ENCODE measurements at regions of chr3 and their contacts with region 1.

Region 1: GRCh38 chr3:155854141-155854940 is at the start of gene SLC33A1:
- DNase-seq: peak; percentile 99
- H3K4me3 Mint-ChIP-seq: peak within 1 kb of the TSS; percentile 97
- H3K27ac Mint-ChIP-seq: peak within 1 kb of the TSS; percentile 99
- H3K4me1 Mint-ChIP-seq: peaks cover 31% of the 10 kb centered on the region
- H3K27me3 Mint-ChIP-seq: no peaks in the 10 kb centered on the region
- total RNA-seq, gene SLC33A1: 20.5 to 23.6 TPM

Region 2: GRCh38 chr3:154120961-154121700 is 1733.2 kb before region 1 on chr3 and contains the start of gene ARHGEF26:
- CTCF ChIA-PET with region 1: no interaction called
- POLR2A ChIA-PET with region 1: no interaction called
- intact Hi-C with region 1: loop called (anchors 10 kb)
- DNase-seq: peak; percentile 86
- H3K4me3 Mint-ChIP-seq: peak within 1 kb of the TSS; percentile 79
- H3K27ac Mint-ChIP-seq: no peak within 1 kb of the TSS
- H3K4me1 Mint-ChIP-seq: peaks cover 22% of the 10 kb centered on the region
- H3K27me3 Mint-ChIP-seq: peaks cover 61% of the 10 kb centered on the region
- total RNA-seq, gene ARHGEF26: 0.24 to 0.34 TPM

Region 3: DNA sequence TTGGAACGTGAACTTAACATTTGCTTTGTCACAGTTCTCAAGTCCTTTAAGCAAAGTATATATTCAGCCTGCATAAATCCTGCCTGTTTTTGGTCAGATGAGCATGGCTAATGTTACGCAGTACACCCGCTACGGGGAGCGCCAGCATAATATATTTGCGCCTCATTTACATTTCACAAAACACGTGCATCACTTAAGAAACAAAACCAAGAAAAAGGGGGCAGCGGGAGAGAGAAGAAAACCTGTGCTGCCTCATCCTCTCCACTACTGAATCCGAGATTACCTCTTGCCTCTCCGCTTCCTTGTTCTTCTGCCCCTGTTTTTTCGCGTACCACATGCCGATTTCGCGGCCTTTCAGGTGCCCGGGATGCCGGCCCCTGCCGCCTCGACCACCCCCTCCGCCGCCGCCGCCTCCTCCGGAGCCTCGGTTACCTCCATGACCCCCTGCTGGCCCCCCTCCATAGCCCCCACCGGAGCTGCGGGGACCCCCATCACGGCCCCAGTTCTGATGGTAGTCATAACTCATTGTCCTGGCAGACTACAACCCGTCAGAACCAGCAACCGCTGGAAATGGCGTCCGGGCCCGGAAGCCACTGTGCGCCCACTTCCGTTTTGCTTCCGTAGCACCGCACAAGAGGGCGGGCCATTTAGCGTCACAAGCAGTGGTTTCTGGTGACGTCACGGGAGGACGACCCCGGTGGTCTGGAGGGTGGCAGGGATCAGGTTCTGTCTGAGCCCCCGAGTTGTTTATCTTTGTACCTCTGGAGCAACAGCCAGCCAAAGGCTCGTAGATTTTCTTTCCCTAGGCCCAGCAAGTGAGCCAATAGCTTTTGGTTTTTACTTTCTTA is 1530.2 kb before region 1 on chr3 and contains the start of gene DHX36:
- CTCF ChIA-PET with region 1: no interaction called
- POLR2A ChIA-PET with region 1: no interaction called
- intact Hi-C with region 1: loop called (anchors 5 kb)
- DNase-seq: peak; percentile 93
- H3K4me3 Mint-ChIP-seq: peak within 1 kb of the TSS; percentile 85
- H3K27ac Mint-ChIP-seq: peak within 1 kb of the TSS; percentile 96
- H3K4me1 Mint-ChIP-seq: peaks cover 29% of the 10 kb centered on the region
- H3K27me3 Mint-ChIP-seq: no peaks in the 10 kb centered on the region
- total RNA-seq, gene DHX36: 65.5 to 71.1 TPM

Region 4: DNA sequence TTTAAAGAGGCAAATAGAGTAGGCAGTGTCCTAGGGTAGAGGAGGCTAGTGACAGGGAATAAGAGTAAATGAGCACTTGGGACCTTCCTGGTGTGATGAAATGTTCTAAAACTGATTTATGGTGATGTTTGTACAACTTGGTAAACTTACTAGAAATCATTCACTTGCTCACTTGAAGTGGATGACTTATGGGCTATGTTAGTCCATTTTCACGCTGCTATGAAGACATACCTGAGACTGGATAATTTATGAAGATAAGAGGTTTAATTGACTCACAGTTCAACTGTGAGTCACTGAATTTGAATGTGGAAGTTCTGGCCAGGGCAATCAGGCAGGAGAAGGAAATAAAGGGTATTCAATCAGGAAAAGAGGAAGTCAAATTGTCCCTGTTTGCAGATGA is 1498.3 kb before region 1 on chr3:
- CTCF ChIA-PET with region 1: no interaction called
- POLR2A ChIA-PET with region 1: no interaction called
- intact Hi-C with region 1: no loop called
- DNase-seq: no peak
- H3K4me3 Mint-ChIP-seq: no peak overlapping the region
- H3K27ac Mint-ChIP-seq: no peak overlapping the region
- H3K4me1 Mint-ChIP-seq: no peaks in the 10 kb centered on the region
- H3K27me3 Mint-ChIP-seq: peaks cover 17% of the 10 kb centered on the region

Region 5: DNA sequence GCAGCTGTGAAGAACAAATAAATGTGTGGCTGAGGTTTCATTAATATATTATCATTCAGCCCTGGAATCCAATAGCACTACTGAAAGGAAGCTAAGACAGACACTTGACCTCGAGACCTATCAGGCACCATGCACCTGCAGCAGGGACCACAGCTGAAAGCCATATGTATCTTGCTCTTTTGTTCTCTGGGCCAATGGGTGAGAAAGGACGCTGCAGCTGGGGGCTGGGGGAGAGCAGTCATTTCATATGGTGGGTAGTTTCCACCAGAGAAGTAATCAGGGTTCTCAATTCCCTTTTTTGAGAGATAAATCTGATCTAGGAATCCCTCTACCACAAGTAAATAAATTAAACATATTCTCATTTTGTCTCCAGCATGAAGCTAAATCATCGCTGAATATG is 335.3 kb before region 1 on chr3:
- CTCF ChIA-PET with region 1: no interaction called
- POLR2A ChIA-PET with region 1: no interaction called
- intact Hi-C with region 1: no loop called
- DNase-seq: no peak
- H3K4me3 Mint-ChIP-seq: no peak overlapping the region
- H3K27ac Mint-ChIP-seq: no peak overlapping the region
- H3K4me1 Mint-ChIP-seq: no peaks in the 10 kb centered on the region
- H3K27me3 Mint-ChIP-seq: no peaks in the 10 kb centered on the region

Region 6: GRCh38 chr3:155744626-155745324 is 109.6 kb before region 1 on chr3 and contains the start of gene PLCH1:
- CTCF ChIA-PET with region 1: no interaction called
- POLR2A ChIA-PET with region 1: no interaction called
- intact Hi-C with region 1: loop called (anchors 2 kb)
- DNase-seq: peak; percentile 66
- H3K4me3 Mint-ChIP-seq: peak within 1 kb of the TSS; percentile 79
- H3K27ac Mint-ChIP-seq: no peak within 1 kb of the TSS
- H3K4me1 Mint-ChIP-seq: peaks cover 15% of the 10 kb centered on the region
- H3K27me3 Mint-ChIP-seq: peaks cover 32% of the 10 kb centered on the region
- total RNA-seq, gene PLCH1: 0.10 to 0.12 TPM

Region 7: GRCh38 chr3:155815030-155815429 is 39.3 kb before region 1 on chr3:
- CTCF ChIA-PET with region 1: no interaction called
- POLR2A ChIA-PET with region 1: no interaction called
- intact Hi-C with region 1: no loop called
- DNase-seq: no peak
- H3K4me3 Mint-ChIP-seq: no peak overlapping the region
- H3K27ac Mint-ChIP-seq: no peak overlapping the region
- H3K4me1 Mint-ChIP-seq: no peaks in the 10 kb centered on the region
- H3K27me3 Mint-ChIP-seq: peaks cover 3% of the 10 kb centered on the region

Region 8: GRCh38 chr3:155870133-155870944 is 16.0 kb after region 1 on chr3 and contains the start of gene GMPS:
- CTCF ChIA-PET with region 1: interaction called, 3 read pairs
- POLR2A ChIA-PET with region 1: interaction called, 24 read pairs
- intact Hi-C with region 1: loop called (anchors 1 kb)
- DNase-seq: peak; percentile 97
- H3K4me3 Mint-ChIP-seq: peak within 1 kb of the TSS; percentile 92
- H3K27ac Mint-ChIP-seq: peak within 1 kb of the TSS; percentile 88
- H3K4me1 Mint-ChIP-seq: peaks cover 25% of the 10 kb centered on the region
- H3K27me3 Mint-ChIP-seq: no peaks in the 10 kb centered on the region
- total RNA-seq, gene GMPS: 143 to 152 TPM

Region 9: GRCh38 chr3:155978324-155978723 is 124.0 kb after region 1 on chr3:
- CTCF ChIA-PET with region 1: no interaction called
- POLR2A ChIA-PET with region 1: no interaction called
- intact Hi-C with region 1: no loop called
- DNase-seq: no peak
- H3K4me3 Mint-ChIP-seq: no peak overlapping the region
- H3K27ac Mint-ChIP-seq: no peak overlapping the region
- H3K4me1 Mint-ChIP-seq: no peaks in the 10 kb centered on the region
- H3K27me3 Mint-ChIP-seq: no peaks in the 10 kb centered on the region

Region 10: DNA sequence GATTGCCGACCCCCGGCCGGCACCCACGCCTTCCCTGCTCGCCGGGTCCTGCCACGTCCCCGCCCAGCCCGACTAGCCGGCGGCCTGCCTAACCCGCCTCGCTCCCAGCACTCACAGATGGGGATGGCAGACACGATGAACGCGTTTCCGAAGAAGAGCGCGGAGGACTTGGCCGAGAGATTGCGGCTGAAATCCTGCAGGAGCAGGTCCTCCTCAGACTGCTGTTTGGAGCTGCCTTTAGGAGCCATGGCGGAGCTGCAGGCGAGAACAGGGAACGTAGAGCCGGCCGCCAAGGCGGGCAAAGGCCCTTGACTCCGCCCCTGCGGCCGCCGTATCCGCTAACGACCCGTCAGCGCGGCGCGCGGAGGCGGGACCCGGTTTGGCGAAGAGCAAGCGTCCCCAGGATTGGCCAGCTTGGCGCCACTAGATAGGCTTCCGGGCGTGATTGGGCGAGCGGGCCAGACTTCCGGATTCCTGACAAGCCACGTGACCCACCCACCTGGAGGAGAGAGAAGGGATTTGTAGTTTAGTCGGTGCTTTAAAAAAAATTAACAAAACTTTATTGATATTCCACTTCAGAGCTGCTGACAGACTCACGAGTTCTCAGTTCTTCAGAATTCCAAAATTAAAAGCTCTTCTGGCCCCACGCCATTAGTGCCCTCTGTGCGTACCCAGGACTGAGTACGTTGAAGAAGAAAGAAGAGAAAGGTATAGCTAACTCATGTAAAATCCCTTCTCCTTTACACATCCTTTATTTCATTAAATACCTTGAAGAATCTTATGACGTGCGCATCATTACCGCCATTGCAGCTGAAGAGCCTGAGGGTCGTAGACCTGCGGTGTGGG is 700.7 kb after region 1 on chr3 and contains the start of gene SSR3:
- CTCF ChIA-PET with region 1: no interaction called
- POLR2A ChIA-PET with region 1: no interaction called
- intact Hi-C with region 1: loop called (anchors 10 kb)
- DNase-seq: peak; percentile 99
- H3K4me3 Mint-ChIP-seq: peak within 1 kb of the TSS; percentile 97
- H3K27ac Mint-ChIP-seq: peak within 1 kb of the TSS; percentile 88
- H3K4me1 Mint-ChIP-seq: peaks cover 46% of the 10 kb centered on the region
- H3K27me3 Mint-ChIP-seq: no peaks in the 10 kb centered on the region
- total RNA-seq, gene SSR3: 162 to 170 TPM

Region 11: GRCh38 chr3:157159762-157160657 is 1305.7 kb after region 1 on chr3 and contains the start of gene CCNL1:
- CTCF ChIA-PET with region 1: interaction called, 3 read pairs
- POLR2A ChIA-PET with region 1: interaction called, 3 read pairs
- intact Hi-C with region 1: loop called (anchors 2 kb)
- DNase-seq: peak; percentile 96
- H3K4me3 Mint-ChIP-seq: peak within 1 kb of the TSS; percentile 94
- H3K27ac Mint-ChIP-seq: peak within 1 kb of the TSS; percentile 99
- H3K4me1 Mint-ChIP-seq: peaks cover 46% of the 10 kb centered on the region
- H3K27me3 Mint-ChIP-seq: peaks cover 2% of the 10 kb centered on the region
- total RNA-seq, gene CCNL1: 144 to 150 TPM